ENCODE measurements at regions of chr5 and their contacts with region 1.

Region 1: DNA sequence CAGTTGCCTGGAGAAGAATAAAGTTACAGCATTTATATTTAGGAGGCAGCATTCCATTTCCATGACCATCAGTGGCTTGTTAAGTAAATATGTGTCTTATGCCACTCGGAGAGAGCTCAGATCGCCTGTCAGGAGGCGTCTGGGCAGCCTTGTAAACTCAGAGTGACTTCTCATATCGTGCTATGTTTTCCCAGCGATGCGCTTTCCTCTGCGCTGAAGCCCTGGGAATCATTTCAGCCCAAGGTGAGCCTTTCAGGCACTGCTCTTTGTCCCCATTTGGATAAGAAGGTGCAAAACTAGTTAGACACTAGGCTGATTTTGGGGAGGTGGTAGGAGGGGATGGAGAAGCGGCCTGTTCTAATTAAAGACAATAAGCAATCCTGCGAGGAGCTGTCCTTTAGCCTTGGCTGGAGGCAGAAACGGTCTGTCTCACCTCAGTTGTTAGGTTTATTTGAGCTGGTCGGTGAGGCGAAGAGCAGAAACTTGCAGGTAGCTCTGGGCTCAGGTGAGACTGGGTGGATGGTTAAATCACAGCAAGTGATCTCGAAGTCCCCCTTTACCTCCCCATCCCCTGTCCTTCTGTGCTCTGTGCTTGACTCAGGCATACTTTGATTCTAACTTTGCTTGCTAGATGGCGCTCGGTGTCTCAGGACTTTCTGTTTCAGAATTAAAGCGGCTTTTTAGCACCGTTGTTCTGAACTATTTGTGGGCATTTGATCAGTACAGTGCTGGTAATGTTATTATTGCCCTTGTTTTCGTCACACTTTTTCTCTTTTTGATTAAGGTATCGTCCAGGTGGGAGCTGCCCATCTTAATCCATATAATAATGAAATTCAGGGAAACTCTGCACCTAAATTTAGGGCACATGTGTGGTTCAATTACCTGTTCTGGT is 24.6 kb downstream of the NR2F1 start:
- DNase-seq: peak; percentile 89
- ATAC-seq: peak; percentile 75
- H3K4me3 ChIP-seq: peak overlapping the region; percentile 41
- H3K27ac ChIP-seq: peak overlapping the region; percentile 38; the same call in 1 of the 2 replicates
- H3K4me1 ChIP-seq: peaks cover 5% of the 10 kb centered on the region
- H3K27me3 ChIP-seq: peaks cover 18% of the 10 kb centered on the region
- CTCF ChIP-seq: peak; percentile 64
- POLR2A ChIP-seq: no peak
- RAD21 ChIP-seq: peak; percentile 69

Region 2: GRCh38 chr5:93620487-93621326 is 13.1 kb after region 1 on chr5:
- CTCF ChIA-PET with region 1: interaction called, 11 read pairs
- POLR2A ChIA-PET with region 1: interaction called, 3 read pairs
- dilution Hi-C with region 1: no loop called
- in situ Hi-C with region 1: no loop called
- intact Hi-C with region 1: no loop called
- DNase-seq: peak; percentile 68
- ATAC-seq: peak; percentile 83
- H3K4me3 ChIP-seq: peak overlapping the region; percentile 87
- H3K27ac ChIP-seq: peak overlapping the region; percentile 87
- H3K4me1 ChIP-seq: no peaks in the 10 kb centered on the region
- H3K27me3 ChIP-seq: no peaks in the 10 kb centered on the region
- CTCF ChIP-seq: peak; percentile 21; the same call in 1 of the 2 replicates
- POLR2A ChIP-seq: peak; percentile 29; the same call in 1 of the 2 replicates
- RAD21 ChIP-seq: peak; percentile 41

Region 3: DNA sequence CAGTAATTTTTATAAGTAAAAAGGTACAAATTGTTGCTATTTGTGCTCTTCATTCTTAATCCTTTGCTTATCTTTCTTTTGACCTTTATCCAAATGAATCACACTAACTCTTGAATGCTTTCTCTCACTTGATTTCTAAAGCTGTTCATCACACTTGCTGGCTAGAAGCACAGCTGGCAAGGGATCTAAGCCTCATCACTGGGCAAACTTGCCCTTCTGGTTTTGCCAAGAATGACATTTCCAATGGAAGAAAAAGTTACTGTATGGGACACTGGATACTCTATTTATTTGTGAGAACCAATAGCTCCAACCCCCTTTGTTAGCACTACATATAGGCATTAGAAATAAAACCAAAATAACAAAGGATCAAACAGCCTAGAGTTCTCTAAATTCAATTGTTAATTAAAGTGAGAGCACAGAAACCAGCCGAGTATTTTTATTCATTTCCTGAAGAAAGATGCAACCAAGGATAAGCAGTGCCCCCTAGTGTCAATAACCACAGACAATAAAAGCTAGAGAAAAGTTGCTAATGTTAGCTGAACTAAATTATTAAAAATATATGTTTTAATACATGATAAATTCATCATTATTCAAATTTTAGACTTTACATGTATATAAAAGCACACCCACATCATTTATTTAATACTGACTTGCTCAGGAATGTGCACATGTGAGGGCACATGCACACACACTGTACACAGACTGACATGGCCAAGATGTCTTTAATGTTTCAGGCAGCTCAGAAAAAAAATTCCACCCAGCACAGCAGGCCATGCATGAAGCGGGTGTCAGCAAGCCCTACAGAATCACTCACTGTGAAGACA is 193.6 kb after region 1 on chr5:
- CTCF ChIA-PET with region 1: interaction called, 13 read pairs
- POLR2A ChIA-PET with region 1: no interaction called
- dilution Hi-C with region 1: no loop called
- in situ Hi-C with region 1: no loop called
- intact Hi-C with region 1: loop called (anchors 2 kb)
- DNase-seq: peak; percentile 64
- ATAC-seq: peak; percentile 73
- H3K4me3 ChIP-seq: no peak overlapping the region
- H3K27ac ChIP-seq: no peak overlapping the region
- H3K4me1 ChIP-seq: no peaks in the 10 kb centered on the region
- H3K27me3 ChIP-seq: no peaks in the 10 kb centered on the region
- CTCF ChIP-seq: peak; percentile 75
- POLR2A ChIP-seq: no peak
- RAD21 ChIP-seq: peak; percentile 85

Region 4: DNA sequence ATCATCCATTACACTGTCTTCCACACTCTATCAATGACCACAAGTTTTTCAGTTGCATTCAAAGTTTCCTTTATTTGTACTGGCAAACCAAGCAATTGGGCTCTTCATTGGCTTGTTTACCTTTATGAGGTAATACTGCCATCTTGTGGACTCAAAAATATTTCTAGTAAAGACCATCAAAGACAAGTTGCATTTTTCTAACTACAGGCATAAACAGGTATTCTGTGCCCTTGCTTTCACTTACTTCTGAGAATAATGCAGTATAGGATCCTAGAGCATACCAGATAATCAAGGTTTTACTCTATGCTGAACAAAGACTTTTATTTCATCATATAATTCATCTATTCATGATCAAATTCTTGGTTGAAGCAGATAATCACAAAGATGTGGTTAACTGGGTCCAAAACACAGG is 307.5 kb after region 1 on chr5:
- CTCF ChIA-PET with region 1: no interaction called
- POLR2A ChIA-PET with region 1: no interaction called
- dilution Hi-C with region 1: no loop called
- in situ Hi-C with region 1: no loop called
- intact Hi-C with region 1: loop called (anchors 5 kb)
- DNase-seq: peak; percentile 73
- ATAC-seq: peak; percentile 56; the same call in 1 of the 2 replicates
- H3K4me3 ChIP-seq: no peak overlapping the region
- H3K27ac ChIP-seq: no peak overlapping the region
- H3K4me1 ChIP-seq: no peaks in the 10 kb centered on the region
- H3K27me3 ChIP-seq: no peaks in the 10 kb centered on the region
- CTCF ChIP-seq: peak; percentile 69
- POLR2A ChIP-seq: no peak
- RAD21 ChIP-seq: peak; percentile 75

Region 5: GRCh38 chr5:94218374-94218773 is 610.8 kb after region 1 on chr5:
- CTCF ChIA-PET with region 1: no interaction called
- POLR2A ChIA-PET with region 1: no interaction called
- dilution Hi-C with region 1: no loop called
- in situ Hi-C with region 1: no loop called
- intact Hi-C with region 1: loop called (anchors 5 kb)
- DNase-seq: peak; percentile 86
- ATAC-seq: peak; percentile 89
- H3K4me3 ChIP-seq: no peak overlapping the region
- H3K27ac ChIP-seq: no peak overlapping the region
- H3K4me1 ChIP-seq: peaks cover 4% of the 10 kb centered on the region; the same call in 1 of the 2 replicates
- H3K27me3 ChIP-seq: no peaks in the 10 kb centered on the region
- CTCF ChIP-seq: no peak
- POLR2A ChIP-seq: no peak
- RAD21 ChIP-seq: no peak

Region 6: DNA sequence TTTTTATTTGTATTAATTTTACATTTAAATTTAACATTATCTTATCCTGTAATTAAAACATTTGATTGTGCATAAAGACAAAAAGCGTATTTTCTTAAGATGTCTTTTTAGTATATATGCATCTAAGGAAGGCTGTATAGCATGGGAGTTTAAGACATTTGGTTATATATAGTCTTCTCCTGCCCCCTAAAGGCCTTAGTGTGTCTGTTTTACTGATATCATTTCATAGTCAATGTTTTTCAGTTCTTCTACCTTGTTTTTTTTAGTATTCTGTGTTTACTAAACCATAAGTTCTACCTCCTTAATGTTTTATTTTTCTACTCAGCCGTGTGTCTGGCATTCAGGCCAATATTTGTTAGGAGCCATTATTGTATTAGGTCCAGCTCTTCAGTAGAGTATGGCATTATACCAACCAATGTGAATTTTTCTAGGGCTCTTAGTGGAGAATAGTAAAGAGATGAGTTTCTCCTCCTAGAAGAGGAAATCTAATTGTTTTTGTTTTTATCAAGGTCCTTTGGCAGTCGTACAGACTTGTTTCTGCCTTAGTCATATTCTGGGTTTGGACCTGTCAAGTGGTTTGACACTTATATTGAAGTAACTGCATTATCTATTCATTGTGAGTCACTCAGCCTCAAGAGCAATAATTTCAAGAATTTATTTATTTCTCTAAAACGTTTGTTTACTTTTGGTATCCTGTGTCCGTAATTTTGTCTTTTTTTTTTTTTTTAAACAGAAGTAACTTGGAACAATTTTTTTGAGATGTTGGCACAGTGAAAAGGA is 1085.6 kb after region 1 on chr5:
- CTCF ChIA-PET with region 1: no interaction called
- POLR2A ChIA-PET with region 1: no interaction called
- dilution Hi-C with region 1: no loop called
- in situ Hi-C with region 1: no loop called
- intact Hi-C with region 1: loop called (anchors 5 kb)
- DNase-seq: peak; percentile 93
- ATAC-seq: peak; percentile 80
- H3K4me3 ChIP-seq: no peak overlapping the region
- H3K27ac ChIP-seq: no peak overlapping the region
- H3K4me1 ChIP-seq: peaks cover 4% of the 10 kb centered on the region
- H3K27me3 ChIP-seq: no peaks in the 10 kb centered on the region
- CTCF ChIP-seq: peak; percentile 49
- POLR2A ChIP-seq: no peak
- RAD21 ChIP-seq: peak; percentile 50